ENCODE measurements at regions of chr1 and their contacts with region 1.

Region 1: DNA sequence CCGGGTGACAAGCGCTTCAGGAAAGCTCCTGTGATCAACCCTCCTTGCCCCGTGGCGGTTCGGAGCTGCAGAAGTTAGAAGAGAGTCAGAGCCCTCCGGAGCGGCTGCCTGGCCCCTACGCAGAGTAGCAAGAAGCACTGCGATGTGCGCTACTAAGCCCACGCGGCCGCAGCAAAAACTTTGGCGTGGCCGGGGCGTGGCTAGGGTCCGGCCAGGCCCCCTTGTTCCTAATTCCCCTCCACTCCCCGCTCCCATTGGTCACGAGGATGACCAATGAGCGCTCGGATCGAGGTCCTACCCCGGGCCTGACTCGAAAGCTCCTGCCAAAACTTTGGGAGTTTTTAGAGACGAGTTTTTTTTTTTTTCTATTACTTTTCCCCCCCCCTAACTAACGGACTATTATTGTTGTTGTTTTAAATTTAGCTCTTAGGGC is at the start of gene HLX:
- DNase-seq: peak; percentile 51 to 58
- H3K4me3 ChIP-seq: peak within 1 kb of the TSS; percentile 93
- H3K27ac ChIP-seq: no peak within 1 kb of the TSS
- H3K4me1 ChIP-seq: peaks cover 6% of the 10 kb centered on the region
- H3K27me3 ChIP-seq: no peaks in the 10 kb centered on the region
- CTCF ChIP-seq: no peak
- total RNA-seq, gene HLX: 1.1 and 1.8 TPM in 2 replicates

Region 2: GRCh38 chr1:221125976-221126375 is 246.9 kb after region 1 on chr1:
- CTCF ChIA-PET with region 1: no interaction called
- POLR2A ChIA-PET with region 1: no interaction called
- intact Hi-C with region 1: no loop called
- DNase-seq: no peak
- H3K4me3 ChIP-seq: no peak overlapping the region
- H3K27ac ChIP-seq: no peak overlapping the region
- H3K4me1 ChIP-seq: peaks cover 7% of the 10 kb centered on the region; the same call in 1 of the 2 replicates
- H3K27me3 ChIP-seq: no peaks in the 10 kb centered on the region
- CTCF ChIP-seq: no peak

Region 3: GRCh38 chr1:221272940-221273339 is 393.8 kb after region 1 on chr1:
- CTCF ChIA-PET with region 1: interaction called, 13 read pairs
- POLR2A ChIA-PET with region 1: no interaction called
- intact Hi-C with region 1: no loop called
- DNase-seq: no peak
- H3K4me3 ChIP-seq: no peak overlapping the region
- H3K27ac ChIP-seq: no peak overlapping the region
- H3K4me1 ChIP-seq: no peaks in the 10 kb centered on the region
- H3K27me3 ChIP-seq: no peaks in the 10 kb centered on the region
- CTCF ChIP-seq: no peak; the same call in 1 of the 2 replicates

Measured in PC-9 (cell line).